MCF 10A (cell line): ENCODE measurements at regions of chr9 and their contacts with region 1.

Region 1: GRCh38 chr9:18255158-18255629 is 218.8 kb upstream of the ADAMTSL1 start:
- DNase-seq: peak; percentile 87
- H3K4me3 Mint-ChIP-seq: no peak overlapping the region
- H3K27ac Mint-ChIP-seq: no peak overlapping the region
- H3K4me1 Mint-ChIP-seq: peaks cover 6% of the 10 kb centered on the region
- H3K27me3 Mint-ChIP-seq: no peaks in the 10 kb centered on the region
- CTCF ChIP-seq: peak; percentile 91

Region 2: GRCh38 chr9:17185481-17186029 is 1069.6 kb before region 1 on chr9:
- CTCF ChIA-PET with region 1: no interaction called
- POLR2A ChIA-PET with region 1: no interaction called
- intact Hi-C with region 1: no loop called
- DNase-seq: no peak
- H3K4me3 Mint-ChIP-seq: no peak overlapping the region
- H3K27ac Mint-ChIP-seq: no peak overlapping the region
- H3K4me1 Mint-ChIP-seq: no peaks in the 10 kb centered on the region
- H3K27me3 Mint-ChIP-seq: no peaks in the 10 kb centered on the region
- CTCF ChIP-seq: no peak

Region 3: GRCh38 chr9:17824191-17824590 is 431.0 kb before region 1 on chr9:
- CTCF ChIA-PET with region 1: no interaction called
- POLR2A ChIA-PET with region 1: no interaction called
- intact Hi-C with region 1: no loop called
- DNase-seq: no peak
- H3K4me3 Mint-ChIP-seq: no peak overlapping the region
- H3K27ac Mint-ChIP-seq: no peak overlapping the region
- H3K4me1 Mint-ChIP-seq: no peaks in the 10 kb centered on the region
- H3K27me3 Mint-ChIP-seq: no peaks in the 10 kb centered on the region
- CTCF ChIP-seq: no peak

Region 4: GRCh38 chr9:18154661-18155060 is 100.5 kb before region 1 on chr9:
- CTCF ChIA-PET with region 1: no interaction called
- POLR2A ChIA-PET with region 1: no interaction called
- intact Hi-C with region 1: no loop called
- DNase-seq: no peak
- H3K4me3 Mint-ChIP-seq: no peak overlapping the region
- H3K27ac Mint-ChIP-seq: no peak overlapping the region
- H3K4me1 Mint-ChIP-seq: no peaks in the 10 kb centered on the region
- H3K27me3 Mint-ChIP-seq: peaks cover 65% of the 10 kb centered on the region
- CTCF ChIP-seq: no peak

Region 5: DNA sequence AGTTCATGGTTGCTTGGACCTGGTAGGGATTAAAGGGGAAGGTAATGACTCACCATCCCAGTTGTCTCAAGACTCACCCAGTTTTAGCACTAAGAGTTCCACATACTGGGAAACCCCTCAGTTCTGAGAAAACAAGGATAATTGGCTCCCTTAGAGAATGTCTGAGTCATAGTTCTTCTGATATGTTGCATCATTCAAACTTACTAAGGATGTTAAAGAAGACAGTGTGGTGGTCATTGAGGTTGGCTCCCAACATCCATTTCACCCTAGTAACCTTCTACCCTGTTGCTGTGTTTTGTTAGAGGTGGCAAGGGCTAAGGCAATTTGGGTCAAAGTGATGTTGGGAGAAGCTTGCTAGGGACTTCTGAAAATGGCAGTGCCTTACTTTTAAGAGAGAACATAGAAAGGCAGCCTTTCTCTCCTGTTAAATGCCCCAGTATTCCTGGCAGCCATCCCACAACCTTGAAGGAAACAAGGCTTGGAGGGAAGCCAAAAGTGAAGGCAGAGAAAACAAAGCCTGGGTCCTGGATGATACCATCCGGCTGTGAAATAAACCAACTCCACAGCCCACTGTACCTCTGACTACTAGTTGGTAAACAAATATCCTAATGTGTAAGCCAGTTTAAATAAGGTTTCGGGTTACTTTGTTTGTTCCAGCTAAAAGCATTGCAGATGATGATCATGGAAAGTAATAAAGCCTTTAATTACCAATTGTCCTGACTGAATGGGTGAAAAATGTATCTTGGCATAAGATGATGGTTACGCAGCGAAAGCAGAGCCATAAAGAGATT is 138.3 kb after region 1 on chr9:
- CTCF ChIA-PET with region 1: interaction called, 10 read pairs
- POLR2A ChIA-PET with region 1: interaction called, 3 read pairs
- intact Hi-C with region 1: loop called (anchors 2 kb)
- DNase-seq: peak; percentile 99
- H3K4me3 Mint-ChIP-seq: peak overlapping the region; percentile 47
- H3K27ac Mint-ChIP-seq: peak overlapping the region; percentile 95
- H3K4me1 Mint-ChIP-seq: peaks cover 24% of the 10 kb centered on the region
- H3K27me3 Mint-ChIP-seq: no peaks in the 10 kb centered on the region
- CTCF ChIP-seq: no peak

Region 6: GRCh38 chr9:18442629-18443491 is 187.7 kb after region 1 on chr9:
- CTCF ChIA-PET with region 1: interaction called, 126 read pairs
- POLR2A ChIA-PET with region 1: interaction called, 4 read pairs
- intact Hi-C with region 1: loop called (anchors 1 kb)
- DNase-seq: peak; percentile 80
- H3K4me3 Mint-ChIP-seq: no peak overlapping the region
- H3K27ac Mint-ChIP-seq: no peak overlapping the region
- H3K4me1 Mint-ChIP-seq: peaks cover 7% of the 10 kb centered on the region
- H3K27me3 Mint-ChIP-seq: no peaks in the 10 kb centered on the region
- CTCF ChIP-seq: peak; percentile 72

Region 7: DNA sequence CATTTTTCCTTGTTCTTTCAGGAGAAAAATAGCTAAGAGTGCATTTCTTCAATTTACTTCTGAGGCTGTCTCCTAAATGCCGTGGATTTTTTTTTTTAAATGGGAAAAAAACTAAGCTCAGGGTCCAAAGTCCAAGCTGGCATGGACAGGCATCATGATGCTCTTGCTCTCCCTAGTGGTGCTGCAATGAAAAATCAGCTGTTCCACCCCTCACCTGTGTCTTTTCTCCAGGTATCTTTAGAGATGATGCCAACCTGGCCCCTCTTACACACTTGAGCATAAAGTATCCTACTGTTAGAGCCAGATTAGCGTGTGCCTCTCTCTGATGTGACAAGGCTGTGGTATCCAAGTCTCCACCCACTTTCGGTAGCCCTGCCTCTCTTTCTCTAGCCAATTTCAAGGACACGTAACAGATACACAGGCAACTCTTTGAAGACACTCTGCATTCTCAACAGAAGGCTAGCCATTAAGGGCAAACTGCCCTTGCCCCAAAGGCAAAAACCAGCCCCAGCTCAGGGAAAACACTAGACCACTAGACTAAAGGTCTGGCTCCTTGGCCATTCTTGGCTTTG is 569.0 kb after region 1 on chr9:
- CTCF ChIA-PET with region 1: interaction called, 57 read pairs
- POLR2A ChIA-PET with region 1: interaction called, 6 read pairs
- intact Hi-C with region 1: loop called (anchors 1 kb)
- DNase-seq: peak; percentile 45
- H3K4me3 Mint-ChIP-seq: no peak overlapping the region
- H3K27ac Mint-ChIP-seq: no peak overlapping the region
- H3K4me1 Mint-ChIP-seq: no peaks in the 10 kb centered on the region
- H3K27me3 Mint-ChIP-seq: no peaks in the 10 kb centered on the region
- CTCF ChIP-seq: peak; percentile 47

Region 8: DNA sequence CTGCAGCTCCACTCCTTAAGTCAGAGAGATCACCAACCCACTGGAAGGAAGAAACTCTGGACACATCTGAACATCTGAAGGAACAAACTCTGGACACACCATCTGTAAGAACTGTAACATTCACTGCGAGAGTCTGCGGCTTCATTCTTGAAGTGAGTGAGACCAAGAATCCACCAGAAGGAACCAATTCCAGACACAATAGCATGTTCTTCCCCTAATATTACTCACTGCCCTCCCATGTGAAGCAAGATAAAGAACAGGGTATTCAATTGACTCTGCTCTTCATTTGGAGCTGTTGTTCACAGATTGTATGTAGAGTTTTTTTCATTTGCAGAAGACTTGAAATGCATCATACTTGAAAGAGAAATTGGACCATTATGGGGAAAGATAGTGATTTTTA is 767.0 kb after region 1 on chr9:
- CTCF ChIA-PET with region 1: interaction called, 95 read pairs
- POLR2A ChIA-PET with region 1: no interaction called
- intact Hi-C with region 1: no loop called
- DNase-seq: no peak
- H3K4me3 Mint-ChIP-seq: no peak overlapping the region
- H3K27ac Mint-ChIP-seq: no peak overlapping the region
- H3K4me1 Mint-ChIP-seq: no peaks in the 10 kb centered on the region
- H3K27me3 Mint-ChIP-seq: peaks cover 15% of the 10 kb centered on the region
- CTCF ChIP-seq: no peak

Region 9: GRCh38 chr9:19456996-19457692 is 1202.0 kb after region 1 on chr9:
- CTCF ChIA-PET with region 1: no interaction called
- POLR2A ChIA-PET with region 1: no interaction called
- intact Hi-C with region 1: loop called (anchors 5 kb)
- DNase-seq: peak; percentile 80
- H3K4me3 Mint-ChIP-seq: peak overlapping the region; percentile 33
- H3K27ac Mint-ChIP-seq: no peak overlapping the region
- H3K4me1 Mint-ChIP-seq: no peaks in the 10 kb centered on the region
- H3K27me3 Mint-ChIP-seq: no peaks in the 10 kb centered on the region
- CTCF ChIP-seq: peak; percentile 91